Activated CD4-positive, alpha-beta memory T cell treated with anti-CD3 and anti-CD28 coated beads, Interleukin-2, amount 10 ng/mL, durations not matched to agents 7 days and 5 days (primary cell): ENCODE measurements at regions of chr4 and their contacts with region 1.

Region 1: GRCh38 chr4:53929955-53930798 is 134.2 kb downstream of the CHIC2 start:
- DNase-seq: peak; percentile 56
- H3K4me3 Mint-ChIP-seq: no peak overlapping the region
- H3K27ac Mint-ChIP-seq: no peak overlapping the region
- H3K4me1 Mint-ChIP-seq: no peaks in the 10 kb centered on the region
- H3K27me3 Mint-ChIP-seq: peaks cover 4% of the 10 kb centered on the region

Region 2: DNA sequence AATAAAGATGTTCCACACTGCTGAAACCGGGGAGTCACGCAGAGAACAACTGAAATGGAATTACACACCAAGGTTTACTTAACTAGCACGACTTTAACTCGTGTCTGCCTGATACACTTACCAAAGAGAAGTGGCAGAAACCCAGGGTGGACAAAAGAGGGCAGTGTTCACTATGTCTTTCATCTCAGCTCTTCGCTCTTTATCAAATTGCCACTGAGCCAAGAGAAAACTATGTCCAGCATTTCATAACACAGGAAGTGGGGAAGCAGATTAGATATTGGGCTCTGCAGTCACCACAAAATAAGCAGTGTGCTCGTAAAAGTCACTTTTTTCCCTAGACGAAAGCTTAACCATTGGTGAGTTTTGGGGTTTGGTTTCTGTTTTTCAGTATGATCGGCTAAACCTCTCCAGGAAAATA is 21.5 kb before region 1 on chr4:
- CTCF ChIA-PET with region 1: interaction called, 12 read pairs
- POLR2A ChIA-PET with region 1: no interaction called
- DNase-seq: peak; percentile 20
- H3K4me3 Mint-ChIP-seq: no peak overlapping the region
- H3K27ac Mint-ChIP-seq: no peak overlapping the region
- H3K4me1 Mint-ChIP-seq: peaks cover 13% of the 10 kb centered on the region
- H3K27me3 Mint-ChIP-seq: peaks cover 41% of the 10 kb centered on the region

Region 3: DNA sequence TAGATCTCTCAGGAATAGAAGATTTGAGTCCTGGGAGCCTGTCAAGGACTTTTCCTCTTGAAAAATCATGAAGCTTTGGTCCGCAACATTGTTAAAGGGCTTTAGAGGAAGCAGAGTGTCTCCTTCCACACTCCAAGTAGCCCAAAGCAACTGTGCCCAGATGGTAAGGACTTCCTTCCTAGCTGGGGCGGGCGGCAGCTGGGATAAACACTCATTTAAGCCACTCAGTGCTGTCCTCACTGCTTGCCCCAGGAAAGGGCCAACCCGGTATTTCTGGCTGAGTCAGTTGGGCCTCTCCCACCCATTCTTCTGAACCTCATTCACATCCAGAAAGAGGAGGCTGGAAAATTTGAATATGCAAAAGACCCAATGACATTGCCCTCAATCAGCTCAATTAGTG is 10.1 kb before region 1 on chr4:
- CTCF ChIA-PET with region 1: interaction called, 18 read pairs
- POLR2A ChIA-PET with region 1: no interaction called
- DNase-seq: no peak
- H3K4me3 Mint-ChIP-seq: no peak overlapping the region
- H3K27ac Mint-ChIP-seq: no peak overlapping the region
- H3K4me1 Mint-ChIP-seq: no peaks in the 10 kb centered on the region
- H3K27me3 Mint-ChIP-seq: peaks cover 18% of the 10 kb centered on the region

Region 4: DNA sequence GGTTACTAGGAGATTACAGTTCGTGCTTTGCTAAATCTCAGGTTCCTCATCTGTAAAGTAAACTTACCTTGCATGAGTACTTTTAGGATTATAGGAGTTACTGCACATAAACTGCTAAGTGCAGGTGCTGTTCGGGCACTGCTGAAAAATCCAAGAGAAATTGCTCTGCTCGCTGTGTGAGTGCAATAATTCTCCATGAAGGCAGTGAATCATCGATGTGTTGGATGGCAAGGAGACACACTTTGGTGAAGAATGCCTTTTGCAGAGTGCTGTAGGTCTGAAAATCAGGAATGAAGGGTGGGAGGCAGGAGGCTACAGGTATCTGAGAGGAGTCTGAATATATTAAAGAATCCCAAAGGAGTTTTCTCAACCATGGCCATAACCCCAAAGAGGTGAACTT is 21.2 kb after region 1 on chr4:
- CTCF ChIA-PET with region 1: no interaction called
- POLR2A ChIA-PET with region 1: no interaction called
- DNase-seq: no peak
- H3K4me3 Mint-ChIP-seq: no peak overlapping the region
- H3K27ac Mint-ChIP-seq: no peak overlapping the region
- H3K4me1 Mint-ChIP-seq: no peaks in the 10 kb centered on the region
- H3K27me3 Mint-ChIP-seq: peaks cover 2% of the 10 kb centered on the region

Region 5: DNA sequence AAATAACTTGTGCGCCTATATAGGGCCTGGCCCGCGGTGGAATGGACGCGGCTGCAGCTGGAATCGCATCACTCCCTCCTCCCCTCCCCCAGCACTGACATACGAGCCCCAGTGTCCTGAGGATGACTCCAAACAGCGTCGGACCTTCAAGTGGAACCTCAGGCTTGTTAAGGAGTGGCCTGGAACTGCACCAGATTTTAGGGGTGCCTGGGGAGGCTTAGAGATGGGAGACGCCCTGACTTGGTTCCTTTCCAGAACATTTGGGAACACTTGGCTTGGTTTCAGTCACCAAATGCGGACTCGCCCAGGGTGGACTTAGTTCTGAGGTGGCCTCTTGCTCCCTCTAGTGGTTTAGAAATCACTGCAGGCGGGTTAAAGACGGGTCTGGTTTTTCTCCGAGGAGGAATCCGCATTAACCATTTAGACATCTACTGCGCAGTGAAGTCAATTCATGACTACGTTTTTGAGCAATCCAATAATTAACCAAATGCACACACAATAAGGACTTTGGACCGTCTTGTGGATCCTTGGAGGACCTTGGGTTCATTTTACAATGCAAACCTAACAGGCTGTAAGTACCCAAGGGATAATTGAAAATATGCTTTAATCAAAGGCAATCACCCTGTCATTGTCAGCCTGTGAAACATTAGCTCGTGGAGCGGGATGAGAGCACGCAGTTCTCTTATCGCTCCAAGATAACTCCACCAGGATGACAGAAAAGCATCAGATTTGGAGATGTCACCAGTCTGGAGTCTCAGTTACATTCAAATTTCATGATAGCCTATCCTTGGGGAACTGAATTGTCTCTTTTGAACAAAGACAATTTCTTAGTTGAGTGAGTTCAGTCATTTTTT is 287.7 kb after region 1 on chr4:
- CTCF ChIA-PET with region 1: interaction called, 24 read pairs
- POLR2A ChIA-PET with region 1: no interaction called
- DNase-seq: peak; percentile 53
- H3K4me3 Mint-ChIP-seq: no peak overlapping the region
- H3K27ac Mint-ChIP-seq: no peak overlapping the region
- H3K4me1 Mint-ChIP-seq: peaks cover 3% of the 10 kb centered on the region
- H3K27me3 Mint-ChIP-seq: peaks cover 33% of the 10 kb centered on the region

Region 6: GRCh38 chr4:54233277-54233696 is 303.1 kb after region 1 on chr4:
- CTCF ChIA-PET with region 1: interaction called, 59 read pairs
- POLR2A ChIA-PET with region 1: no interaction called
- DNase-seq: peak; percentile 76
- H3K4me3 Mint-ChIP-seq: peak overlapping the region; percentile 49
- H3K27ac Mint-ChIP-seq: no peak overlapping the region
- H3K4me1 Mint-ChIP-seq: peaks cover 26% of the 10 kb centered on the region
- H3K27me3 Mint-ChIP-seq: peaks cover 69% of the 10 kb centered on the region

Region 7: GRCh38 chr4:54268151-54268550 is 338.0 kb after region 1 on chr4:
- CTCF ChIA-PET with region 1: no interaction called
- POLR2A ChIA-PET with region 1: no interaction called
- DNase-seq: no peak
- H3K4me3 Mint-ChIP-seq: no peak overlapping the region
- H3K27ac Mint-ChIP-seq: no peak overlapping the region
- H3K4me1 Mint-ChIP-seq: peaks cover 3% of the 10 kb centered on the region
- H3K27me3 Mint-ChIP-seq: peaks cover 19% of the 10 kb centered on the region